Posterior vena cava (tissue), 2 donors: ENCODE measurements at regions of chr16 and their contacts with region 1.

Region 1: GRCh38 chr16:78675216-78675651 is 575.8 kb downstream of the WWOX start:
- DNase-seq: no peak

Region 2: GRCh38 chr16:77424871-77425604 is 1250.2 kb before region 1 on chr16:
- intact Hi-C with region 1: loop called in 1 of 2 experiments (anchors 5 kb)
- DNase-seq: no peak

Region 3: DNA sequence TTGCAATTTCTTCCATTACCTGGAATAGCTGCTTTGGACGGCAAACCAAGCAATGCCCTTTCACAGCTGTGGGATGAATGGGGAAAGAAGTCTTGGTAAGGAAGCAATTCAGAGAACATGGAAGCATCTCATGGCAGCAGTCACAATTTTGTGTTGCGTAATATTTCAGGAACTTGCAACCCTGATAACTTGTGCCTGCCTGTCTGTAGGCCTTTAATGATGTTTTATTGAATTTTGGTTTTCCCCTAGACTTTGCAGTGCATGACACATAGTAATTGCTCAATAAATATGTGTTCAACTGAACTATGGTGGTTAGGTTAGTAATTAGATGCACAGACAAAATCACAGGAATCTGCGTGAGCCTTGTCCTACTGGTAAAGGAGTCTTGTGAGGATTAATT is 136.3 kb before region 1 on chr16:
- intact Hi-C with region 1: no loop called
- DNase-seq: no peak